GM12878 (cell line): ENCODE measurements at regions of chr12 and their contacts with region 1.

Region 1: GRCh38 chr12:92987362-92987761 is 58.3 kb upstream of the EEA1 start:
- DNase-seq: no peak
- ATAC-seq: peak; percentile 54
- H3K4me3 ChIP-seq: peak overlapping the region; percentile 32; the same call in 1 of the 2 replicates
- H3K27ac ChIP-seq: peak overlapping the region; percentile 94
- H3K4me1 ChIP-seq: peaks cover 27% of the 10 kb centered on the region
- H3K27me3 ChIP-seq: no peaks in the 10 kb centered on the region
- CTCF ChIP-seq: peak; percentile 39 to 64 (median 52); a peak in 5 of 6 replicates
- EP300 ChIP-seq: peak in 1 of 2 experiments; percentile 32; a peak in 1 of 4 replicates
- POLR2A ChIP-seq: no peak
- RAD21 ChIP-seq: peak; percentile 84

Region 2: GRCh38 chr12:92753976-92754885 is 233.1 kb before region 1 on chr12:
- CTCF ChIA-PET with region 1: no interaction called
- POLR2A ChIA-PET with region 1: no interaction called
- RAD21 ChIA-PET with region 1: no interaction called
- SMC1A ChIA-PET with region 1: no interaction called
- in situ Hi-C with region 1: no loop called
- intact Hi-C with region 1: no loop called
- DNase-seq: no peak
- ATAC-seq: no peak
- H3K4me3 ChIP-seq: no peak overlapping the region
- H3K27ac ChIP-seq: no peak overlapping the region
- H3K4me1 ChIP-seq: no peaks in the 10 kb centered on the region
- H3K27me3 ChIP-seq: no peaks in the 10 kb centered on the region
- CTCF ChIP-seq: no peak
- EP300 ChIP-seq: no peak
- POLR2A ChIP-seq: no peak
- RAD21 ChIP-seq: no peak

Region 3: DNA sequence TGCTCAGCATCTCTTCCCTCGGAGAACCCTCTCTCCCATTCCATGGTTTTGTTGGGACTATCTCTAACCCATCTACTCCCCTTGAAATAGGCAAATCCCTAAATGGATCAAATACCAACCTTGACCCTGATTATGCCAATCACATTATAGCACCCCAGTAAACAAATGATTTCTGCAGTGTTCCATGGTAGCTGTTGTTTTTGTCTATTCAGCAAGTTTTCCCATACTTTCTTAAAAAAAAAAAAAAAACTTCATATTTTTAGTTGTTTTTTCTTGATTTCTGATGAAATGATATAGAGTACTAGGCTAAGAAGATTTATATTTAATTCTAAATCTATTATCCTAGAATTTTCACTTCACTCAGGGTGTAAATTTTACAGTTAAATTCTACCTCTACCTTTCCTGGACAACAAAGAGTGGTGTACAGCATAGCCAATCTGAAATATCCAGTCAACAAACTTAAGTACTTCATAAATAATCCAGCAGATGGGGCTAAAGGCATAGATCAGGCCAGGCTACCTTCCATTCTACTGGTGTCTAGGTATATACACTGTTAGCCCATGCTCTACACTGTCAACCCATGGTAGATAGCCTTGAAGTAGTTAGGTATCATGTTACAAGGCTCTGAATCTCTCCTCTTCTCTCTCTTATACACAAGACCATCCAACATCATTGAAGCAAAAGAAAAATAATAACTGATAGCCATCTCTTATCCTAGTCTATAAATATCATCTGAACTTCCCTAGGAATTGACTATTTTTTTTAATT is 202.4 kb before region 1 on chr12:
- CTCF ChIA-PET with region 1: interaction called, 31 read pairs
- POLR2A ChIA-PET with region 1: no interaction called
- RAD21 ChIA-PET with region 1: interaction called, 8 read pairs
- SMC1A ChIA-PET with region 1: interaction called, 30 read pairs
- in situ Hi-C with region 1: no loop called
- intact Hi-C with region 1: loop called (anchors 1 kb)
- DNase-seq: peak; percentile 70
- ATAC-seq: peak; percentile 99
- H3K4me3 ChIP-seq: no peak overlapping the region
- H3K27ac ChIP-seq: no peak overlapping the region
- H3K4me1 ChIP-seq: peaks cover 2% of the 10 kb centered on the region; the same call in 1 of the 2 replicates
- H3K27me3 ChIP-seq: no peaks in the 10 kb centered on the region
- CTCF ChIP-seq: peak; percentile 51 to 84 (median 57); a peak in 5 of 6 replicates
- EP300 ChIP-seq: no peak
- POLR2A ChIP-seq: no peak
- RAD21 ChIP-seq: peak; percentile 97

Region 4: GRCh38 chr12:93002293-93003054 is 15.1 kb after region 1 on chr12:
- CTCF ChIA-PET with region 1: interaction called, 68 read pairs
- POLR2A ChIA-PET with region 1: interaction called, 39 read pairs
- RAD21 ChIA-PET with region 1: interaction called, 92 read pairs
- SMC1A ChIA-PET with region 1: interaction called, 420 read pairs
- in situ Hi-C with region 1: no loop called
- intact Hi-C with region 1: no loop called
- DNase-seq: no peak
- ATAC-seq: no peak
- H3K4me3 ChIP-seq: no peak overlapping the region
- H3K27ac ChIP-seq: no peak overlapping the region
- H3K4me1 ChIP-seq: peaks cover 11% of the 10 kb centered on the region
- H3K27me3 ChIP-seq: no peaks in the 10 kb centered on the region
- CTCF ChIP-seq: no peak
- EP300 ChIP-seq: no peak
- POLR2A ChIP-seq: no peak
- RAD21 ChIP-seq: no peak

Region 5: GRCh38 chr12:93089805-93090569 is 102.6 kb after region 1 on chr12:
- CTCF ChIA-PET with region 1: interaction called, 8 read pairs
- POLR2A ChIA-PET with region 1: interaction called, 6 read pairs
- RAD21 ChIA-PET with region 1: interaction called, 66 read pairs
- SMC1A ChIA-PET with region 1: interaction called, 42 read pairs
- in situ Hi-C with region 1: no loop called
- intact Hi-C with region 1: loop called (anchors 2 kb)
- DNase-seq: no peak
- ATAC-seq: peak; percentile 81
- H3K4me3 ChIP-seq: no peak overlapping the region
- H3K27ac ChIP-seq: no peak overlapping the region
- H3K4me1 ChIP-seq: peaks cover 4% of the 10 kb centered on the region
- H3K27me3 ChIP-seq: no peaks in the 10 kb centered on the region
- CTCF ChIP-seq: no peak
- EP300 ChIP-seq: no peak
- POLR2A ChIP-seq: no peak
- RAD21 ChIP-seq: no peak

Region 6: GRCh38 chr12:93167841-93168492 is 180.6 kb after region 1 on chr12:
- CTCF ChIA-PET with region 1: interaction called, 15 read pairs
- POLR2A ChIA-PET with region 1: interaction called, 9 read pairs
- RAD21 ChIA-PET with region 1: interaction called, 15 read pairs
- SMC1A ChIA-PET with region 1: interaction called, 21 read pairs
- in situ Hi-C with region 1: no loop called
- intact Hi-C with region 1: loop called (anchors 2 kb)
- DNase-seq: peak; percentile 95
- ATAC-seq: peak; percentile 84
- H3K4me3 ChIP-seq: peak overlapping the region; percentile 69
- H3K27ac ChIP-seq: peak overlapping the region; percentile 88
- H3K4me1 ChIP-seq: peaks cover 32% of the 10 kb centered on the region
- H3K27me3 ChIP-seq: no peaks in the 10 kb centered on the region
- CTCF ChIP-seq: no peak
- EP300 ChIP-seq: peak; percentile 78 to 87; a peak in 3 of 4 replicates
- POLR2A ChIP-seq: no peak
- RAD21 ChIP-seq: peak; percentile 23; the same call in 1 of the 2 replicates

Region 7: GRCh38 chr12:93397412-93397811 is 410.1 kb after region 1 on chr12:
- CTCF ChIA-PET with region 1: interaction called, 95 read pairs
- POLR2A ChIA-PET with region 1: interaction called, 5 read pairs
- RAD21 ChIA-PET with region 1: interaction called, 54 read pairs
- SMC1A ChIA-PET with region 1: interaction called, 99 read pairs
- in situ Hi-C with region 1: no loop called
- intact Hi-C with region 1: loop called (anchors 2 kb)
- DNase-seq: no peak
- ATAC-seq: no peak
- H3K4me3 ChIP-seq: no peak overlapping the region
- H3K27ac ChIP-seq: no peak overlapping the region
- H3K4me1 ChIP-seq: no peaks in the 10 kb centered on the region; the same call in 1 of the 2 replicates
- H3K27me3 ChIP-seq: no peaks in the 10 kb centered on the region
- CTCF ChIP-seq: no peak
- EP300 ChIP-seq: no peak
- POLR2A ChIP-seq: no peak
- RAD21 ChIP-seq: no peak

Region 8: DNA sequence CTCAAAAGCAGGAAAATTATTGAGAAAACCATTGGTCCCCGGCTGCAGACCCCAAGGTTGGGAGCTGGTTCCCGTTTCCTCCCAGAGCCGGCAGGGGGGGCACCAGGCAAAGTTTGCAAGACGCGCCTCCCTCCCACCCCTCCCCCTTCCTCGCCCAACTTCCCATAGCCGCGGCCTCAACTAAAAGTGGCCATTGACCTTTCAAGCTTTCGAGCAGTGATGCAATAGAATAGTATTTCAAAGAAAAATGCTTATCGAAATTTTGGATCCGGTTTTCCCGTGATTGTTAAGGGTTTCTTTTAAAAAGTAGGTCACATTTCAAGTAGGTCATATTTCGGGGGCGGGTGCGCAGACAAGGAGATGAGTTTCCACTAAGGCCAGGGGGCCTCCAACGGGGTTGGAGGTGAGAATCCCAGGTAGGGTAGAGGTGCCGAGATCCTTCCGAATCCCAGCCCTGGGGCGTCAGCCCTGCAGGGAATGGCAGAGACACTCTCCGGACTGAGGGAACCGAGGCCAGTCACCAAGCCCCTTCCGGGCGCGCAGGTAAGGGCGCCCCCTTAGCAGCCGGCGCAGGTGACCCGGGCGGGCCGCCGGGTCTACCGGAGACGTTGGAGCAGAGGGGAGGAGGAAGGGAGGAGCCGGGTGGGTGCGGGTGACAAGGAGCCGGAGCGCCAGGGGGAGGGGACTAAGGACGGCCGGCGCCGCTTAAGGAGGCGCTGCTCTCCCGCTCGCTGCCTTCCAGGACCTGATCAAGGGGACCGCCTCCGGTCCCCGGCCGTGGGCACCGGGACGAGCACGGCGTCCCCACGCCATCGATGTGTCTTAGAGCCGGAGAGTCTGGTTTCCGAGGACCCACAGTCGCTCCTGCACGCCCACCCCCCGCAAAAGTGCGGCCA is 582.5 kb after region 1 on chr12:
- CTCF ChIA-PET with region 1: interaction called, 7 read pairs
- POLR2A ChIA-PET with region 1: no interaction called
- RAD21 ChIA-PET with region 1: interaction called, 11 read pairs
- SMC1A ChIA-PET with region 1: interaction called, 4 read pairs
- in situ Hi-C with region 1: no loop called
- intact Hi-C with region 1: loop called (anchors 5 kb)
- DNase-seq: no peak
- ATAC-seq: peak; percentile 73
- H3K4me3 ChIP-seq: peak overlapping the region; percentile 81
- H3K27ac ChIP-seq: no peak overlapping the region
- H3K4me1 ChIP-seq: peaks cover 6% of the 10 kb centered on the region; the same call in 1 of the 2 replicates
- H3K27me3 ChIP-seq: peaks cover 11 to 15% of the 10 kb centered on the region in 2 experiments
- CTCF ChIP-seq: peak; percentile 73 to 92 (median 83)
- EP300 ChIP-seq: no peak
- POLR2A ChIP-seq: no peak
- RAD21 ChIP-seq: peak; percentile 89